ENCODE measurements at regions of chr17 and their contacts with region 1.

Region 1: DNA sequence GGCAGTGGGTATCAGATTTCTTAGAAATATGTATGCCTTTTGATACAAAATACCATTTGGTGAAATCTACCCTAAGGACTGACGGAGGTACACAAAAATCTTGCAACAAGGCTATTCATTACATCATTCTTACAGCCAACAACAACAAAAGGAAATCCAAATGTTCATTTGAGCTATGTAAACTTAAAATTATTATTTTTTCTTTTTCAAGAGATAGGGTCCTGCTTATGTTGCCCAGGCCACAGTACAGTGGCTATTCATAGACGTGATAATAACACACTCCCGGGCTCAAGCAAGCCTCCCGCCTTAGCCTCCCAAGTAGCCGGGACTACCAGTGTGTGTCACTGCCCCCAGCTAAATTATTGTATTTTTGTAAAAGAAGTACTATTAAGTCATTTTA is 9.0 kb downstream of the SRR start:
- DNase-seq: no peak
- H3K4me3 ChIP-seq: no peak overlapping the region
- H3K27ac ChIP-seq: peak overlapping the region; percentile 18; the same call in 1 of the 2 replicates
- H3K4me1 ChIP-seq: no peaks in the 10 kb centered on the region; the same call in 1 of the 2 replicates
- H3K27me3 ChIP-seq: no peaks in the 10 kb centered on the region
- CTCF ChIP-seq: no peak

Region 2: GRCh38 chr17:1590031-1590748 is 722.5 kb before region 1 on chr17:
- CTCF ChIA-PET with region 1: no interaction called
- POLR2A ChIA-PET with region 1: interaction called, 11 read pairs
- intact Hi-C with region 1: no loop called
- DNase-seq: peak; percentile 84 to 95
- H3K4me3 ChIP-seq: peak overlapping the region; percentile 19; the same call in 1 of the 2 replicates
- H3K27ac ChIP-seq: peak overlapping the region; percentile 30
- H3K4me1 ChIP-seq: peaks cover 24% of the 10 kb centered on the region
- H3K27me3 ChIP-seq: no peaks in the 10 kb centered on the region
- CTCF ChIP-seq: no peak

Region 3: GRCh38 chr17:2459917-2460271 is 147.2 kb after region 1 on chr17:
- CTCF ChIA-PET with region 1: no interaction called
- POLR2A ChIA-PET with region 1: no interaction called
- intact Hi-C with region 1: no loop called
- DNase-seq: no peak
- H3K4me3 ChIP-seq: no peak overlapping the region
- H3K27ac ChIP-seq: no peak overlapping the region
- H3K4me1 ChIP-seq: no peaks in the 10 kb centered on the region
- H3K27me3 ChIP-seq: no peaks in the 10 kb centered on the region
- CTCF ChIP-seq: no peak

Region 4: GRCh38 chr17:2484876-2485275 is 172.1 kb after region 1 on chr17:
- CTCF ChIA-PET with region 1: no interaction called
- POLR2A ChIA-PET with region 1: no interaction called
- intact Hi-C with region 1: no loop called
- DNase-seq: no peak
- H3K4me3 ChIP-seq: no peak overlapping the region
- H3K27ac ChIP-seq: no peak overlapping the region
- H3K4me1 ChIP-seq: peaks cover 25% of the 10 kb centered on the region
- H3K27me3 ChIP-seq: no peaks in the 10 kb centered on the region
- CTCF ChIP-seq: no peak

Measured in PC-9 (cell line).